ENCODE measurements at regions of chr13 and their contacts with region 1.

Region 1: GRCh38 chr13:79541426-79542049 is 60.6 kb downstream of the NDFIP2 start:
- DNase-seq: no peak
- ATAC-seq: peak; percentile 65
- H3K4me3 ChIP-seq: no peak overlapping the region
- H3K27ac ChIP-seq: no peak overlapping the region
- H3K4me1 ChIP-seq: no peaks in the 10 kb centered on the region
- H3K27me3 ChIP-seq: no peaks in the 10 kb centered on the region
- CTCF ChIP-seq: peak; percentile 91

Region 2: GRCh38 chr13:79267560-79267959 is 274.0 kb before region 1 on chr13:
- intact Hi-C with region 1: no loop called
- DNase-seq: no peak
- ATAC-seq: no peak
- H3K4me3 ChIP-seq: no peak overlapping the region
- H3K27ac ChIP-seq: no peak overlapping the region
- H3K4me1 ChIP-seq: no peaks in the 10 kb centered on the region
- H3K27me3 ChIP-seq: no peaks in the 10 kb centered on the region
- CTCF ChIP-seq: no peak

Region 3: GRCh38 chr13:79423801-79424642 is 117.5 kb before region 1 on chr13:
- intact Hi-C with region 1: loop called (anchors 5 kb)
- DNase-seq: no peak
- ATAC-seq: peak; percentile 59
- H3K4me3 ChIP-seq: no peak overlapping the region
- H3K27ac ChIP-seq: no peak overlapping the region
- H3K4me1 ChIP-seq: no peaks in the 10 kb centered on the region
- H3K27me3 ChIP-seq: no peaks in the 10 kb centered on the region
- CTCF ChIP-seq: peak; percentile 67